Posterior cingulate gyrus (tissue), 11 donors: ENCODE measurements at regions of chr1 and their contacts with region 1.

Region 1: DNA sequence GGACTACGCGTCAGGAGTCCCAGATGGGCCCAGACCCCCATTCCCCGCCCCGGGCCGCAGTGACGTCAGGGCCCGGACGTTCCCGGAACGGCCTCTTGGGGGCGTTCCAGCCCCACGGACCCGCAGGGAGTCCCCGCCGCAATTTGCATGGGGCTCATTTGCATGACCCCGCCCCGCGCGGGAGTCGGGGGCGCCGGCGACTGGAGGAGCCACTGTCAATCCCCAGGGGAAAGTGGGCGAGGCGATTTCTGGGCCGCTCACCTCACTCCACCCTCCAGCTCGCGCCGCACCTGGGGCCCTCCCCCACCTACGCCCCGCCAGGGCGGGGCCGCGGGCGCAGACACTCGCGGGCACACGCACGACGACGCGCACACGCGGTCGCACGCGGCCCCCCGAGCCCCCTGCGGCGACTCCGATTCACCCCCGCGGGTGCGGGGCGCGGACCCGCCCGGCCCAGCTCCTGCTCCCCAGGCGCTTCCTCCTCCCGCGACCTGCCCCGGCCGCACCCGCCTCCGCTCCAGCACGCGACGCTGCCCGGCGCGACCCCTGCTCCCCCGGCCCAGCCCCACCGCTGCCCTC is 13.2 kb downstream of the AGRN start:
- DNase-seq: peak; percentile 76 to 99 (median 90)

Region 2: DNA sequence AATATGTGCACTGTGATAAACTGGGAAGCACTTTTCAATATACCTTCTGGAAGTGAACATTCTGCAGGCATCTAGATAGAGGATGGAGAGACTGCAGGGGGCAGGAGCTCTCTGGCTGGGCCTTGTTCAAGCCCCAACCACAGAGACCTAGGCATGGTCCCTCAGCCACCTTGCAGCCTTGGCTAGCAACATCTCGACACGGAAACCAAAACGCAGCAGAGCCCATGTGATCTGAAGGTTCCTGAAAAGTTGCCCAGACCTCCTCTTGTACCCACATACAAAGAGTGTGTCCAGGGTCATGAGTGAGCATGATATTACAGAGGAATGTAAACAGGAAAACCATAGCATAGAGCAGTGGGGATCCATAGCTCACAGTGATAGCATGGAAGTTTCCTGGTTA is 142.4 kb before region 1 on chr1:
- intact Hi-C with region 1: no loop called
- DNase-seq: no peak

Region 3: DNA sequence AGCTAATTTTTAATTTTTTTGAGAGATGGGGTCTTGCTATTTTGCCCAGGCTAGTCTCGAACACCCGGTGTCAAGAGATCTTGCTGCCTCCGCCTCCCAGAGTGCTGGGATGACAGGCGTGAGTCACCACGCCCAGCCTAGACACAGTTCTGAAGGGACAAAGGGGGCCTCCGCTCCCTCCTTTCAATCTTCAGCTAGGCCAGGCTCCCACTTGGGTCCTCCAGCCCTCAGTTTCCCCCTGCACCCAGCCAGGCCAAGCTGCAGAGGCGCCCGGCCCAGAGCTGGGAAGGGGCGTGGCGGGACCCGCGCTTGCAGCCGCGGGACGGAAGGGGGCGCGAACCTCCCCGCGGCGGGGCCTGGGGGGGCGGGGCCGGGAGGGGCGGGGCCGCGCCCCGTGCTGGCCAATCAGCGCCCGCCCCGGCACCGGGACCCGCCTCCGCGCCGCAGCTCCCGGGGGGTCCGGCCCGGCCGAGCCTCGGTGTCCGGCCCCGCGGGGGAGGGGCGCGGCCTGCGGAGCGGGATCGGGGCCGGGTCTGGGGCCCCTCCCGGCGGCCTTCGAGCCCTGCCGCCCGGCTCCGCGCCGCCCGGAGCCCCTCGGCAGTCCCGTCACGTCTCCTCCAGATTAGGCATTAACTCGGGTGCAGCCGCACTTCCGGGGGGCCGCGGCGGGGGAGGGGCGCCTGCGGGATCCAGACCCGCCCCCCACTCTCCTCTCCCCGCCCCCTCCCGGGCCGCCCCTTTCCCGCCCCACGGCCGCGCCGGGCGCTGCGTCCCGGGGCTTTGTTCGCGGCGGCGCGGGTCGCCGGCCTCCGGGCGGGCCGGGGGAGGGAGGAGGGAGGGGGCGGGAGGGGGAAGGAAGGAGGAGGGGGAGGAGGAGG is 13.7 kb before region 1 on chr1:
- intact Hi-C with region 1: loop called (anchors 2 kb)
- DNase-seq: peak; percentile 61 to 97 (median 76)

Region 4: GRCh38 chr1:1137256-1138045 is 104.4 kb after region 1 on chr1:
- intact Hi-C with region 1: no loop called
- DNase-seq: no peak

Region 5: GRCh38 chr1:2914702-2915101 is 1881.6 kb after region 1 on chr1:
- intact Hi-C with region 1: no loop called
- DNase-seq: peak in 6 of 10 donors; percentile 15 to 89 (median 43)